ENCODE measurements at regions of chr10 and their contacts with region 1.

Region 1: GRCh38 chr10:119650692-119651513 is at the start of gene BAG3:
- DNase-seq: peak; percentile 96
- H3K4me3 Mint-ChIP-seq: peak within 1 kb of the TSS; percentile 94
- H3K27ac Mint-ChIP-seq: peak within 1 kb of the TSS; percentile 94
- H3K4me1 Mint-ChIP-seq: peaks cover 26% of the 10 kb centered on the region
- H3K27me3 Mint-ChIP-seq: no peaks in the 10 kb centered on the region
- CTCF ChIP-seq: no peak
- total RNA-seq, gene BAG3: 53.7 and 55.2 TPM in 2 replicates

Region 2: DNA sequence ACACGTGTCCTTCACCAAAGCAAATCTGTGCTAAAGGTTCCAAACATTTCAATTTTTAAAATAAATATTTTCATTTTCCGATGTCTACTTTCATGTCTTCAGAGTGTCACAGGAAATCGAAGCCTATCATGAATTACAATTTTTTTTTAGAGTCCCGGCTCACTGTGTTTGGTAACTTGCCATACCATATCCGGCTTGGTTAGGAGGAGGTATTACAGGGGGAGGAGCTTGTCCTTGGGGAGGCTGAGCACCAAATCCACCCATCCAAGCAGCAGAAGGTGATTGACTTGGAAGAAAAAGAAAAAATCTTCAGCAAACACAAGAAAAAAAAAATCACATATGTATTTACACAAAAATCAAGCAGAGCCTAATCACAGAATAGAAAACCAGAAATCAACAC is 75.4 kb before region 1 on chr10:
- CTCF ChIA-PET with region 1: no interaction called
- POLR2A ChIA-PET with region 1: no interaction called
- intact Hi-C with region 1: no loop called
- DNase-seq: peak; percentile 44
- H3K4me3 Mint-ChIP-seq: no peak overlapping the region
- H3K27ac Mint-ChIP-seq: no peak overlapping the region
- H3K4me1 Mint-ChIP-seq: peaks cover 9% of the 10 kb centered on the region
- H3K27me3 Mint-ChIP-seq: no peaks in the 10 kb centered on the region
- CTCF ChIP-seq: no peak

Region 3: GRCh38 chr10:119608316-119609155 is 42.4 kb before region 1 on chr10:
- CTCF ChIA-PET with region 1: interaction called, 6 read pairs
- POLR2A ChIA-PET with region 1: interaction called, 8 read pairs
- intact Hi-C with region 1: loop called (anchors 2 kb)
- DNase-seq: peak; percentile 66
- H3K4me3 Mint-ChIP-seq: no peak overlapping the region
- H3K27ac Mint-ChIP-seq: no peak overlapping the region
- H3K4me1 Mint-ChIP-seq: peaks cover 5% of the 10 kb centered on the region
- H3K27me3 Mint-ChIP-seq: no peaks in the 10 kb centered on the region
- CTCF ChIP-seq: peak; percentile 58

Region 4: GRCh38 chr10:119725828-119726675 is 75.1 kb after region 1 on chr10 and contains the start of gene INPP5F:
- CTCF ChIA-PET with region 1: interaction called, 3 read pairs
- POLR2A ChIA-PET with region 1: interaction called, 62 read pairs
- intact Hi-C with region 1: no loop called
- DNase-seq: peak; percentile 98
- H3K4me3 Mint-ChIP-seq: peak within 1 kb of the TSS; percentile 82
- H3K27ac Mint-ChIP-seq: peak within 1 kb of the TSS; percentile 76
- H3K4me1 Mint-ChIP-seq: peaks cover 45% of the 10 kb centered on the region
- H3K27me3 Mint-ChIP-seq: no peaks in the 10 kb centered on the region
- CTCF ChIP-seq: peak; percentile 5
- total RNA-seq, gene INPP5F: 10.3 and 14.9 TPM in 2 replicates

Region 5: DNA sequence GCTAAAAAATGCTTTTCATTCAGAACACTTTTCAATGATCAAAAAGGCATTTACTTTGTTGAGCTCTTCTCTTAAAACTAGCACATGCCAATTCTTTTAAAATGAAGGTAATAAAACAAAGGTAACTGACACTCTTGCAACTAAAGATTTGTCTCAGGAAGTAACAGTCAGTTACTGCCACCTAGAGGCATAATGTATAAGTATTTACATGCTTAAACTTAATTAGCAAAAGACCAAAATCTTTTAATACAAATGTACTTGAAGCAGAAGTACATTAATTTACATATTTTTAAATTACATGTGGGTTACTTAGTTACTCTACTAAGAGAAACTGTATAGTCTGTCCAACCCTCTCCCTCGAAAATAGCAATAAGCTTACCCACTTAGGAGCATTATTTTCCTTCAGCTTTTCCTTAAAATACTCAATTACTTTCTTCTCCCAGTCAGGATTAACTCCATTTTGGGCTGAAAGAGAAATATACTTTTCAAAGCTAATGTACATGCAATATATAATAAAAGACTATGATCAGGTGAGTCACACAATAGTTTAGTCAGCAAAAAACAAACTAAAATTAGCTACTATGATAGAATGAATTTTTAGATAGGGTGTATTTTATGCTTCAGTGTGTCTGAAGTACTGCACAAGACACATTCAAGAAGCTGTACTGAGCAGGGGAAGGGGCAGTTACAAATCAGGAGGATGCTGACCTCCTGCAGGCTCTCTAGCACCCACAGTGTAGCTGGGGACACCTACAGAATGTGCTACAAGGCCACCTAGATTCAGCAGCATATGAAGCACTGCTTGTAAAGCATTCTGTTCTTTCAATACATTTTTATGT is 208.7 kb after region 1 on chr10:
- CTCF ChIA-PET with region 1: interaction called, 3 read pairs
- POLR2A ChIA-PET with region 1: interaction called, 13 read pairs
- intact Hi-C with region 1: no loop called
- DNase-seq: peak; percentile 63
- H3K4me3 Mint-ChIP-seq: no peak overlapping the region
- H3K27ac Mint-ChIP-seq: peak overlapping the region; percentile 35
- H3K4me1 Mint-ChIP-seq: peaks cover 23% of the 10 kb centered on the region
- H3K27me3 Mint-ChIP-seq: no peaks in the 10 kb centered on the region
- CTCF ChIP-seq: peak; percentile 38